H1 (cell line): ENCODE measurements at regions of chr18 and their contacts with region 1.

Region 1: DNA sequence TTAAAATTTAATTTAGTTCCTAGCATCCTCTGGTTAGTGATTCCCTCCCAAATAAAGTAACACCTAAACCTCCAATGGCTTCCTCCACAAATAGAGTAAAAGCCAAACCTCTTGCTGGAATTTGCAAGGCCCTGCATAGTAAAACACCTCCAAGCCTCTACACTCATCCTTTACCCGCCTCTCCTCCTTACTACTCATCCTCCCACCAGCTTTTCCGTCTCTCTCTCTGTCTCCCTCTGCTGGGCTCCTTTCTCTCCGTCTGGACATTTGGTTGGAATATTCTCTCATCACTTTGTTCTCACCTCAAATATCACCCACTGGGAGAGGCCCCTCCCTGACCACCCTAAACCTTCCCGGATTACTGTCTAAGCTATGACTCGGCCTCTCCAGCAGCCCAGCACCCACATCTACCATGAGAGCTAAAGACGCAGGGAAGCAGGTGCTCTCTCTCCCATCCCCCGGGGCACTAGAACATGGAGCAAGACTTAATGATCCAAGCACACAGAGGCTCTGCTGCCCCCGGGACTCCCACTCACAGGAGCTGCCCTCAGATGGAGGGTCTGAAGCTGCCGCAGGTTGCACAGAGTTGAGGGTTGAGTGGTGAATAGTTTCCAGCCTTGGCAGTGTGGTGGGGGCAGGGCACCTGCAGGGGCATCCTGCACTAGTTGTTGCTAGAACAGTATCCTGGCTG is 167.2 kb downstream of the FBXO15 start:
- DNase-seq: peak; percentile 17 to 82
- H3K4me3 ChIP-seq: no peak overlapping the region
- H3K27ac ChIP-seq: no peak overlapping the region
- H3K4me1 ChIP-seq: peaks cover 0 to 4% (median 3%) of the 10 kb centered on the region in 4 experiments; a peak in 3 of 7 replicates
- H3K27me3 ChIP-seq: no peaks in the 10 kb centered on the region
- CTCF ChIP-seq: peak; percentile 66 to 81 (median 67)
- EP300 ChIP-seq: no peak
- POLR2A ChIP-seq: no peak
- RAD21 ChIP-seq: peak; percentile 74 to 81

Region 2: GRCh38 chr18:73884868-73885267 is 95.6 kb before region 1 on chr18:
- CTCF ChIA-PET with region 1: interaction called, 12 read pairs
- POLR2A ChIA-PET with region 1: no interaction called
- DNase-seq: no peak
- H3K4me3 ChIP-seq: no peak overlapping the region
- H3K27ac ChIP-seq: no peak overlapping the region
- H3K4me1 ChIP-seq: no peaks in the 10 kb centered on the region
- H3K27me3 ChIP-seq: no peaks in the 10 kb centered on the region
- CTCF ChIP-seq: no peak
- EP300 ChIP-seq: no peak
- POLR2A ChIP-seq: no peak
- RAD21 ChIP-seq: no peak

Region 3: DNA sequence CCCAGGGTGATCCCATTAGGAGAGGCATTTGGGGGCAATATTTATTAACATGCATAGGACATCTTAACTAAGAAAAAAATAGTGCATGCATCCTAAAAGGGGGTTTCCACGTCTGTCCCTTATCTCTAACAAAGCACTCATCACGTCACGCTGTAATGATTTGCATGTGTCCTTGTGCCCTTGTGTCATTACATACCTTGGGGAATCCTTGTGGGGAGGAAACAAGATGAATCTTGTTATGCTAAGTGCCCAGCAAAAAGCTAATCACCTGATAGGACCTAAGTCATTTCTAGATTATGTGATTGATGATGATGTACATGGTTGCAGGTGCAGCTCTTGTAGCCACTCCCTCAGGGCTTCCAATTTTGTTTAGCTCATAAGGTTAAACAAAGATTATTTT is 83.7 kb before region 1 on chr18:
- CTCF ChIA-PET with region 1: interaction called, 15 read pairs
- POLR2A ChIA-PET with region 1: no interaction called
- DNase-seq: no peak
- H3K4me3 ChIP-seq: no peak overlapping the region
- H3K27ac ChIP-seq: no peak overlapping the region
- H3K4me1 ChIP-seq: peaks cover 2 to 30% (median 12%) of the 10 kb centered on the region in 4 experiments; a peak in 5 of 7 replicates
- H3K27me3 ChIP-seq: peaks cover 0 to 17% (median under 1%) of the 10 kb centered on the region in 4 experiments; a peak in 5 of 7 replicates
- CTCF ChIP-seq: no peak
- EP300 ChIP-seq: no peak
- POLR2A ChIP-seq: no peak
- RAD21 ChIP-seq: no peak

Region 4: DNA sequence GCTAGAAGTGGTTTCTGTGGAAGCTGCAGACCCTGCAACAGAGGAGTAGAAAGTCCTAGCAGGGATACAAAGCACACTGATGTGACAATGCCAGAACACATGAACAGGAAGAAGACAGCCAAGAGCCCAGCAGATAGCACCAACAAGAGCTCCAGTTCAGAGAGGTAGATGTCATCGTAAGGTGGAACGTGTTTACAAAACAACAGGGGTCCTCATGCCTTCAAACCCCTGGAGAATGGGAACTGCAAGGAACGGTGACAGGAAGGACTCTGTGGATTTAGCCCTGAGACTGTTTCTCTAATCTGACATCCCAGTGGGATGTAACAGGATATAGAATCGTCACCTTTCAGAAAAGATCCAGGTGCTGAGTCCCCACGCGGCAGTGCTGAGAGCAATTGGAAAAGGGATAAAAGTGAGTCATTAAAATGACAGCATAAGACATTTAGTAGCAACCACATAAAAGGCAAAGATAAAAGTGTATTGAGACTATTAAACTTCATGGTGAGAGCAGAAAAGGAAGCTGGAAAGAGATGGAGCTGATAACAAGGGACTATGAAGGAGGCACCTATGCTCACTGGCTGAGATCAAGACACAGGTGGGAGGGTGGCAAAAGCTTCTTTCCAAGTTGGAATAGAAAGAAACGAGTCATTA is 28.0 kb before region 1 on chr18:
- CTCF ChIA-PET with region 1: interaction called, 13 read pairs
- POLR2A ChIA-PET with region 1: no interaction called
- DNase-seq: no peak
- H3K4me3 ChIP-seq: no peak overlapping the region
- H3K27ac ChIP-seq: no peak overlapping the region
- H3K4me1 ChIP-seq: peaks cover 2 to 7% (median 5%) of the 10 kb centered on the region in 4 experiments; a peak in 4 of 7 replicates
- H3K27me3 ChIP-seq: no peaks in the 10 kb centered on the region
- CTCF ChIP-seq: no peak
- EP300 ChIP-seq: no peak
- POLR2A ChIP-seq: no peak
- RAD21 ChIP-seq: no peak

Region 5: GRCh38 chr18:73962256-73962655 is 18.2 kb before region 1 on chr18:
- CTCF ChIA-PET with region 1: interaction called, 22 read pairs
- POLR2A ChIA-PET with region 1: no interaction called
- DNase-seq: no peak
- H3K4me3 ChIP-seq: no peak overlapping the region
- H3K27ac ChIP-seq: no peak overlapping the region
- H3K4me1 ChIP-seq: peaks cover 0 to 2% (median 2%) of the 10 kb centered on the region in 4 experiments; a peak in 3 of 7 replicates
- H3K27me3 ChIP-seq: no peaks in the 10 kb centered on the region
- CTCF ChIP-seq: no peak
- EP300 ChIP-seq: no peak
- POLR2A ChIP-seq: no peak
- RAD21 ChIP-seq: no peak